CD8-positive, alpha-beta T cell (primary cell): ENCODE measurements at regions of chr17 and their contacts with region 1.

Region 1: DNA sequence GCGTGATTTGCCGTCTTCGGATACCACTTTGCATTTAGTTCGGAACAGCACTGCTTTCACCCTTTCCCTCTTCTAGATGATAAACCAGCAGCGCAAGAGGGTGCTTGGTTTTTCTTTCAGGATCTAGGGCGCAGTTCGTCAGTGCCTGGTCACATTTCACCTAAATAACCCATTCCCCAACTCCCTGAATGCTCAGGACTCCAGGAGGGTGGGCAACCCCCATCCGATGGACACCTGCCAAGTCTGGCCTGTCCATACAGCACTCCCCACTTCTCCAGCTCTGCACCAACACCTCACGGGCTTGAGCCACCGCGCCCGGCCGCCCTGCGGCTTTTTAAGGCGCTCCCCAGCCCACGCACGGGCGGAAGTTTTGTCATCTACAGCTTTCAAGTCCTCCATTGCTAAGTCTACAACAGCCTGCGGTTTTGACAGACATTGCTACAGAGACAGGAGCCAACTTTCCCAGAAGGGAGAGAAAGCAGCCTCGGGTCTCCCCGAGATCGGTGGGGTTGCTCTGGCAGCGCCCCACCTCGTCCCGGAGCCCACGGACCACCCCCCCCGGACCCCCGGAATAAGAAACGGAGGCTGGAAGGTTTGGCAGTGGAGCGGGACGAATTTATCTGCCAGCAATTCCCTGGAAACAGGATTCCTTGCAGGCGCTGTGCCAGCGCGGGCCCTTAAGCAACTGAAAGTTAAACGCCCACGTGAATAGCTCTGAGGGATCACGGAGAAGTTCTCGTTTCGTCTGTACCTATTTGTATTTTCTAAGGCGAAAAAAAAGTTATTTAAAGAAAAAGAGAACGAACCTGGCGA is 38.6 kb upstream of the SLFN13 start:
- DNase-seq: peak; percentile 31 to 90 (median 75)
- ATAC-seq: peak; percentile 67
- H3K4me3 ChIP-seq: peak overlapping the region; percentile 77 to 86
- H3K4me3 Mint-ChIP-seq: peak overlapping the region; percentile 90
- H3K27ac ChIP-seq: peak overlapping the region; percentile 83 to 88
- H3K27ac Mint-ChIP-seq: peak overlapping the region; percentile 98
- H3K4me1 ChIP-seq: peaks cover 28% of the 10 kb centered on the region
- H3K4me1 Mint-ChIP-seq: peaks cover 58% of the 10 kb centered on the region
- H3K27me3 ChIP-seq: no peaks in the 10 kb centered on the region
- H3K27me3 Mint-ChIP-seq: no peaks in the 10 kb centered on the region
- CTCF ChIP-seq: no peak

Region 2: GRCh38 chr17:34816848-34817247 is 670.3 kb before region 1 on chr17:
- CTCF ChIA-PET with region 1: no interaction called
- POLR2A ChIA-PET with region 1: no interaction called
- intact Hi-C with region 1: no loop called
- DNase-seq: no peak
- ATAC-seq: no peak
- H3K4me3 ChIP-seq: no peak overlapping the region
- H3K4me3 Mint-ChIP-seq: no peak overlapping the region
- H3K27ac ChIP-seq: no peak overlapping the region
- H3K27ac Mint-ChIP-seq: no peak overlapping the region
- H3K4me1 ChIP-seq: no peaks in the 10 kb centered on the region
- H3K4me1 Mint-ChIP-seq: no peaks in the 10 kb centered on the region
- H3K27me3 ChIP-seq: no peaks in the 10 kb centered on the region
- H3K27me3 Mint-ChIP-seq: no peaks in the 10 kb centered on the region
- CTCF ChIP-seq: no peak

Region 3: DNA sequence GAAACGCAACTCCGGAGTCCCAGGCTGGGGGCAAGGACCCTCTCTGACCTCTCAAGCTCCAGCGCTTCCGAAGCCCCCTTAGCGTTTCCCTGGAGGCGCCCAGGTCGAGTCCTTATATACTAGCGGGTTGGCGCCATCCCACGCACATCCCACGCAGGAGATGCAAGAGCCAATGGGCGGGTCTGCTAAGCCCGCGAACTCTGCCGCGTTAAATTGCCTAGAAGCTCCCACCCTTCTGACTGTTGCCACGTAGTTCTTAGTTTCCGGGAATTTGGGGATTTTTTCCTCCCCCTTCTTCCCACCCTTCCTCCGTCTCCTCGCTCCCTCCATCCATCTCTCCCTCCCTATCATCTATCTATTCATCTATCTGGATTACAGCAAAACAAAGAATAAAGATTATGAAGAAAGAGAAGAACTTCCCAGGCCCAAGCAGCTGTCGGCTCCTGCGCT is 113.6 kb before region 1 on chr17 and contains the start of gene SLFN11:
- CTCF ChIA-PET with region 1: no interaction called
- POLR2A ChIA-PET with region 1: interaction called, 21 read pairs
- intact Hi-C with region 1: no loop called
- DNase-seq: peak; percentile 63 to 95 (median 78)
- ATAC-seq: peak; percentile 88
- H3K4me3 ChIP-seq: peak within 1 kb of the TSS; percentile 85 to 95
- H3K4me3 Mint-ChIP-seq: peak within 1 kb of the TSS; percentile 99
- H3K27ac ChIP-seq: peak within 1 kb of the TSS; percentile 83 to 99
- H3K27ac Mint-ChIP-seq: peak within 1 kb of the TSS; percentile 98
- H3K4me1 ChIP-seq: peaks cover 19% of the 10 kb centered on the region
- H3K4me1 Mint-ChIP-seq: peaks cover 52% of the 10 kb centered on the region
- H3K27me3 ChIP-seq: no peaks in the 10 kb centered on the region
- H3K27me3 Mint-ChIP-seq: no peaks in the 10 kb centered on the region
- CTCF ChIP-seq: no peak
- total RNA-seq, gene SLFN11: 25.6 to 27.2 TPM

Region 4: GRCh38 chr17:35448214-35448898 is 38.8 kb before region 1 on chr17 and contains the start of gene SLFN13:
- CTCF ChIA-PET with region 1: interaction called, 4 read pairs
- POLR2A ChIA-PET with region 1: interaction called, 19 read pairs
- intact Hi-C with region 1: loop called (anchors 5 kb)
- DNase-seq: peak; percentile 58 to 93 (median 84)
- ATAC-seq: peak; percentile 90
- H3K4me3 ChIP-seq: peak within 1 kb of the TSS; percentile 57 to 70
- H3K4me3 Mint-ChIP-seq: peak within 1 kb of the TSS; percentile 87
- H3K27ac ChIP-seq: peak within 1 kb of the TSS; percentile 51 to 58
- H3K27ac Mint-ChIP-seq: peak within 1 kb of the TSS; percentile 93
- H3K4me1 ChIP-seq: peaks cover 16% of the 10 kb centered on the region
- H3K4me1 Mint-ChIP-seq: peaks cover 19% of the 10 kb centered on the region
- H3K27me3 ChIP-seq: no peaks in the 10 kb centered on the region
- H3K27me3 Mint-ChIP-seq: no peaks in the 10 kb centered on the region
- CTCF ChIP-seq: no peak
- total RNA-seq, gene SLFN13: 16.1 to 17.3 TPM

Region 5: DNA sequence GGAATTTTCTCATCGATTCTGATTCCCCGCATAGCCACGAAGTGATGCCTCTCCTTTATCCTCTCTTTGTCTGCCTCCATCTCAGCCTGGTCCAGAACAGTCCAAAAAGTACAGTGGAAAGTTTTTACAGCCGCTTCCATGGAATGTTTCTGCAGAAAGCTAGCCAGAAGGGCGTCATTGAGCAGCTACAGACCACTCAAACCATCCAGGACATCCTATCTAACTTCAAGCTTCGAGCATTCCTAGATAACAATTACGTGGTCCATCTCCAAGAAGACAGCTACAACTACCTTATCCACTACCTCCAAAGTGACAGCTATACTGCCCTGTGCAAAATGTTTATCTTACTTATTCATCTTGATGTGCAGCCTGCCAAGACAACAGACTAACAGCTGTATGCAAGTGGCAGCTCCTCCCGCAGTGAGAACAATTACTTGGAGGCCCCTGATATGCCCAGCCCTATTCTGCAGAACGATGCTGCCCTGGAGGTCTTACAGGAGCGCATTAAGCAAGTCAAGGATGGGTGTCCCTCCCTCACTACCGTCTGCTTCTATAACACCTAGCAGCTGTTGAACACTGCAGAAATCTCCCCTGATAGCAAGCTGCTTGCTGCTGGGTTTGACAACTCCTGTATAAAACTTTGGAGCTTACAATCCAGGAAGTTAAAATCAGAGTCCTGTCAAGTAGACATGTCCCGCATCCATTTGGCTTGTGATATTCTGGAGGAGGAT is 11.5 kb after region 1 on chr17:
- CTCF ChIA-PET with region 1: interaction called, 10 read pairs
- POLR2A ChIA-PET with region 1: interaction called, 8 read pairs
- intact Hi-C with region 1: no loop called
- DNase-seq: no peak
- ATAC-seq: no peak
- H3K4me3 ChIP-seq: no peak overlapping the region
- H3K4me3 Mint-ChIP-seq: peak overlapping the region; percentile 65
- H3K27ac ChIP-seq: no peak overlapping the region
- H3K27ac Mint-ChIP-seq: peak overlapping the region; percentile 85
- H3K4me1 ChIP-seq: peaks cover 44% of the 10 kb centered on the region
- H3K4me1 Mint-ChIP-seq: peaks cover 80% of the 10 kb centered on the region
- H3K27me3 ChIP-seq: no peaks in the 10 kb centered on the region
- H3K27me3 Mint-ChIP-seq: no peaks in the 10 kb centered on the region
- CTCF ChIP-seq: no peak

Region 6: GRCh38 chr17:35540589-35541404 is 53.7 kb after region 1 on chr17:
- CTCF ChIA-PET with region 1: interaction called, 27 read pairs
- POLR2A ChIA-PET with region 1: interaction called, 50 read pairs
- intact Hi-C with region 1: no loop called
- DNase-seq: peak in 7 of 9 experiments; percentile 17 to 76 (median 47)
- ATAC-seq: peak; percentile 34
- H3K4me3 ChIP-seq: peak overlapping the region; percentile 56 to 59
- H3K4me3 Mint-ChIP-seq: peak overlapping the region; percentile 88
- H3K27ac ChIP-seq: peak overlapping the region; percentile 63 to 89
- H3K27ac Mint-ChIP-seq: peak overlapping the region; percentile 93
- H3K4me1 ChIP-seq: peaks cover 31% of the 10 kb centered on the region
- H3K4me1 Mint-ChIP-seq: peaks cover 49% of the 10 kb centered on the region
- H3K27me3 ChIP-seq: no peaks in the 10 kb centered on the region
- H3K27me3 Mint-ChIP-seq: no peaks in the 10 kb centered on the region
- CTCF ChIP-seq: no peak